HepG2 (cell line): ENCODE measurements at regions of chr5 and their contacts with region 1.

Region 1: DNA sequence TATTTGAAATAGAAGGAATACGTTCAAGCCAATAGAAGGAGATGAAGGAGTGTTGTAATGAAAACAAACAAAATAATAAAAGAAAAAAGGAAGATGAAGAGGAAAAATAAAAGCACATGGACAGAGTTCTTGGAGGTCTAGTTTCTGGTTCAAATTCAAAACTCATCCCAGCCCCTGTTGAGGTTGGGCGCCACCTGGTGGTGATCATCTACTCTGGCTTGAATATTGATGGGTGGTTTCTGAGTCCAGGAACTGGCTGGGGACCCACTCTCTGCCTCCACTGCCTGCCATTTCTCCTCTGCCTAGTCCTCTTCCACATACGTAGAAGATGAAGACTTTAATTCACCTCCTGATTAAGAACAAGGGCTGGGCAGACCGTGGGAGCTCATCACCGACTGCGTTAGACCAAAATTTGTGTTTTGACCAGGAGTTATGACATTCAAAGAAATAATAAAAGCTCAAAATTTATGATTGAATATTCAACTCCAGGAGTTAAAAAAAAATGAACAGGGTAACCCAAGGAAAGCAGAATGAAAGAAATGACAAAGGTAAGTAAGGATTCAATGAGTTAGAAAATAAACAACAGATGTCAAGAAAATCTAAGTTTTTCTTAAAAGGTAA is 99.0 kb upstream of the SLC1A3 start:
- DNase-seq: peak; percentile 59
- ATAC-seq: peak; percentile 79
- H3K4me3 ChIP-seq: no peak overlapping the region
- H3K27ac ChIP-seq: no peak overlapping the region
- H3K4me1 ChIP-seq: peaks cover 1% of the 10 kb centered on the region; the same call in 1 of the 2 replicates
- H3K27me3 ChIP-seq: no peaks in the 10 kb centered on the region
- CTCF ChIP-seq: peak; percentile 81
- EP300 ChIP-seq: no peak
- POLR2A ChIP-seq: no peak
- RAD21 ChIP-seq: peak; percentile 74

Region 2: DNA sequence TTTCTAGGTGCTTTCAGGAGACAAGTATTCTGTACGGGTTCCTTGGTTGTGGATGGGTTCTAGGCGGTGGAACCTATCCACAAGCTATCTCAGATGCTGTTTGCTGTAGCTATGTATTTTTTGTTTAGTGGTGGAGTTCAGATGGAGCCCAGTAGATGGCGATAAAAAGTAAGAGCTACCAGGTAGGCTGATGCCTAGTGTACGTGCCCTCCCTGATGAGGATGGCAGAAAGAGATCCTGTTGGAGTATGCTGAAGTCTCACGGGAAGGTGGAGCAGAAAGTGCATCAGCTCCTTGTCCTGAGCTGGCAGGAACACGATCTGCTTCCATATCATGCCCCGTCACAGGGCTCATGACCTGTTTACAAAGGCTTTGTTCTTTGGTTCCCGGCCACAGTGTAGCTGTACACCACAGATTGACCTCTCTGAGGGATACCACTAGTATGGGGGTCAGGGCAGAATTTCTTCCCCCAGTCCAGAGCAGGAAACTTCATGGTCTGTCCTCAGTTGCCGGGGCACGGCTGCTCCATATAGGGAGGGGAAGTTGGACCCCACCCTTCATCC is 428.2 kb before region 1 on chr5:
- CTCF ChIA-PET with region 1: no interaction called
- POLR2A ChIA-PET with region 1: no interaction called
- in situ Hi-C with region 1: no loop called
- intact Hi-C with region 1: loop called (anchors 10 kb)
- DNase-seq: peak; percentile 55
- ATAC-seq: peak; percentile 99
- H3K4me3 ChIP-seq: peak overlapping the region in 1 of 3 experiments; percentile 38; a peak in 1 of 6 replicates
- H3K27ac ChIP-seq: no peak overlapping the region
- H3K4me1 ChIP-seq: no peaks in the 10 kb centered on the region
- H3K27me3 ChIP-seq: no peaks in the 10 kb centered on the region
- CTCF ChIP-seq: peak; percentile 85
- EP300 ChIP-seq: no peak
- POLR2A ChIP-seq: no peak
- RAD21 ChIP-seq: peak; percentile 31; the same call in 1 of the 2 replicates

Region 3: GRCh38 chr5:36214434-36214833 is 293.0 kb before region 1 on chr5:
- CTCF ChIA-PET with region 1: interaction called, 6 read pairs
- POLR2A ChIA-PET with region 1: no interaction called
- in situ Hi-C with region 1: no loop called
- intact Hi-C with region 1: loop called (anchors 1 kb)
- DNase-seq: peak; percentile 19
- ATAC-seq: no peak
- H3K4me3 ChIP-seq: no peak overlapping the region
- H3K27ac ChIP-seq: no peak overlapping the region
- H3K4me1 ChIP-seq: no peaks in the 10 kb centered on the region
- H3K27me3 ChIP-seq: no peaks in the 10 kb centered on the region
- CTCF ChIP-seq: peak; percentile 39
- EP300 ChIP-seq: no peak
- POLR2A ChIP-seq: no peak
- RAD21 ChIP-seq: no peak

Region 4: DNA sequence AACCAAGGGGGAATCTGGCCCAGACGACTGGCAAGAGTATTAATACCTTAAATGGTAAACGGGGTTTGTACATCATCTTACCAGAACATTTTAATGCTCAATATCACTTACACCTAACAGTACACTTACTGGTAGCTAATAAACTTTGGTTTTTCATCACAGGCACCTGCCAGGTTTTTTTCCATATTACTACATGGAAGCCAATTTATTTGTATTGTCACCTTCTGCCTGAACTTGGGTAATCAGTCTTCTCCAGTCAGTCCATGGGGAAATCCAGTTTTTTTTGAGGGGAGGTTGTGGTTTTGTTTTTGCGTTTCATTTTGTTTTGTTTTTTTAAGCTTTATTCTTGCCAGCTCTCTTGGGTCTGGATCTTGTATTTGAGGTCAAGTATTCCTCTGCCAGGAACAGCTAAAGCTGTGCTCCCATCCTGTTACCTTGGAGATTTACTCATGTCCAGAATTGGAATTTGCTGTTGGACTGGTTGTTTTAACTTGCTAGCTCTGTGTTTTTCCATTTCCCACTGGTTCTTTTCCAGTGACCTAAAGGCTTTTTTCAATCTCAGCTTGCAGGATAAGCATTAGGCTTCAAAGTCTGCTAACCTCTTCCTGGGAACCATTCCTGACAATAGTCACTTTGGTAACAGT is 254.6 kb before region 1 on chr5:
- CTCF ChIA-PET with region 1: no interaction called
- POLR2A ChIA-PET with region 1: no interaction called
- in situ Hi-C with region 1: loop called (anchors 25 kb)
- intact Hi-C with region 1: no loop called
- DNase-seq: no peak
- ATAC-seq: no peak
- H3K4me3 ChIP-seq: no peak overlapping the region
- H3K27ac ChIP-seq: no peak overlapping the region
- H3K4me1 ChIP-seq: no peaks in the 10 kb centered on the region
- H3K27me3 ChIP-seq: no peaks in the 10 kb centered on the region
- CTCF ChIP-seq: no peak
- EP300 ChIP-seq: no peak
- POLR2A ChIP-seq: no peak
- RAD21 ChIP-seq: no peak

Region 5: GRCh38 chr5:36264202-36264760 is 243.2 kb before region 1 on chr5:
- CTCF ChIA-PET with region 1: interaction called, 10 read pairs
- POLR2A ChIA-PET with region 1: no interaction called
- in situ Hi-C with region 1: loop called (anchors 25 kb)
- intact Hi-C with region 1: loop called (anchors 2 kb)
- DNase-seq: no peak
- ATAC-seq: peak; percentile 56; the same call in 2 of the 3 replicates
- H3K4me3 ChIP-seq: no peak overlapping the region; a peak in 1 of 6 replicates
- H3K27ac ChIP-seq: no peak overlapping the region
- H3K4me1 ChIP-seq: peaks cover 9% of the 10 kb centered on the region
- H3K27me3 ChIP-seq: no peaks in the 10 kb centered on the region
- CTCF ChIP-seq: no peak
- EP300 ChIP-seq: no peak
- POLR2A ChIP-seq: no peak
- RAD21 ChIP-seq: no peak

Region 6: DNA sequence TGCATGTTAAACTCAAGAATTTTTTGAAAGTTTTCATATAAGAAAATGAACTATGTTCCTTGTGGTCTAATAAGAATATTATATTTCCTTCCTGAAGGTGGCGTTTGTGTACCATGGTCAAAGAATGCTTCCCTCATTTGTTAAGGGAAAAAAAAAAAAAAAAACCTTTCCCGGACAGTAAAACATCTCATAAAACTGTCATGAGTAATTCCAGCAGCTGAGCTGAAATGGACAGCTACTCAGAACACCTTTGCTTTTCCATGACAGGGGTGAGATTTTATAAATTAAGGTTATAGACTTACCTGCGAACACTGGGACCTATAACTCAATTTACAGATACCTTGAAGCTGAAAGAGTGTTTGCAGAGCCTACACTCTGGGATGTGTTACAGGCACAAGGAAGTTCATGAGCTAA is 92.6 kb before region 1 on chr5:
- CTCF ChIA-PET with region 1: interaction called, 22 read pairs
- POLR2A ChIA-PET with region 1: no interaction called
- in situ Hi-C with region 1: loop called (anchors 5 kb)
- intact Hi-C with region 1: loop called (anchors 1 kb)
- DNase-seq: peak; percentile 24
- ATAC-seq: peak; percentile 33; the same call in 1 of the 3 replicates
- H3K4me3 ChIP-seq: no peak overlapping the region
- H3K27ac ChIP-seq: no peak overlapping the region
- H3K4me1 ChIP-seq: peaks cover 20% of the 10 kb centered on the region
- H3K27me3 ChIP-seq: no peaks in the 10 kb centered on the region; a peak in 1 of 5 replicates
- CTCF ChIP-seq: peak; percentile 52
- EP300 ChIP-seq: no peak
- POLR2A ChIP-seq: no peak
- RAD21 ChIP-seq: no peak

Region 7: DNA sequence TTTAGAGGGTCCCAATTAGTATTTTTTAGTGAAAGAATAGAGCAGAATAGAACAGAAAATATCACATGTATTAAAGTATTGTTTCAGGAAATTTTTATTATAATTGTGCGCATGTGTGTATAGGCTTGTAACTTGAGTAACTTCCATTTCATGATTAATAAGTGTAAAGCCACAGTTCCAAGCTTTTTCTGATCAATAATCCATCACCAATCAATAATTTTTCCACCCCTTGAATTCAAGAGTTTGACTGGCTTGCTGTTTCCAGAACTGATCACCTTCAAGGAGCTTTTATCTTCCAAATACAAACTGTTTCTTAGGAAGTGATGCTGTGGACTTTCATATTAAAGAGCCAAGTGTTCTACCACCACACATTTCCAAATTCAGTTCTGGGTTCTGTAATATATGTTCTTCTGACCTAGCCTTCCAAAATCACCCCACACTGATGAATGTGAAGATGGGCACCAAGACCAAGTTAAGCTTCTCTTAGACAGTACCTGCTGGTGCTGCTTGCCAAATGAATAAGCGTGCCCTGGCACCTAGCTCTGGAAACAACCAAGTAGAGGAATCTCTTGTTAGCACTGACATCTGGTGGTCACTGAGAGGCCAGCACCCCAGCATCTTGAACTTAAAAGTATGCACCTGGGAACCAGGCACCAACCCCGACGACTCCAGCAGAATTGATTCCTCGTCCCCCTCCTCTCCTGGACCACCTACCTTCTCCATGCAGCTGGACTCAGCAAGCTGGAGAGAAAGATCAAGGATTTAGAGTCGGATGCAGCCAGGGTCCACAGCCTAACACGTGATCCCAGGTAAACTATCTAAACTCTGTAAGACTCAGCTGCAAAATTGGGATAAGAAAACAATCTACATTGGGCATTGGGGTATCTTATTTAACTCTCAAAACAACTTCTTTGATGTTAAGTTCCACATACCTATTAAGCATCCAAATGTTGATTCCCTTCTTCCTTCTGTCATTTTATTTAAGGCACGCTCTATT is 188.5 kb after region 1 on chr5:
- CTCF ChIA-PET with region 1: no interaction called
- POLR2A ChIA-PET with region 1: no interaction called
- in situ Hi-C with region 1: no loop called
- intact Hi-C with region 1: loop called (anchors 1 kb)
- DNase-seq: peak; percentile 26
- ATAC-seq: peak; percentile 79
- H3K4me3 ChIP-seq: no peak overlapping the region
- H3K27ac ChIP-seq: no peak overlapping the region
- H3K4me1 ChIP-seq: no peaks in the 10 kb centered on the region
- H3K27me3 ChIP-seq: no peaks in the 10 kb centered on the region; a peak in 2 of 5 replicates
- CTCF ChIP-seq: peak; percentile 73
- EP300 ChIP-seq: no peak
- POLR2A ChIP-seq: no peak
- RAD21 ChIP-seq: 0 out of 2 replicates have a peak, but pooled peaks have one; percentile 42